IMR-90 (cell line): ENCODE measurements at regions of chr13 and their contacts with region 1.

Region 1: GRCh38 chr13:95834134-95834765 is 157.3 kb downstream of the DNAJC3 start:
- DNase-seq: peak; percentile 57
- ATAC-seq: peak; percentile 94
- H3K4me3 ChIP-seq: no peak overlapping the region
- H3K27ac ChIP-seq: no peak overlapping the region
- H3K4me1 ChIP-seq: no peaks in the 10 kb centered on the region
- H3K27me3 ChIP-seq: no peaks in the 10 kb centered on the region
- CTCF ChIP-seq: peak; percentile 96
- POLR2A ChIP-seq: no peak
- RAD21 ChIP-seq: peak; percentile 94

Region 2: GRCh38 chr13:95494082-95494681 is 340.1 kb before region 1 on chr13:
- CTCF ChIA-PET with region 1: interaction called, 4 read pairs
- POLR2A ChIA-PET with region 1: no interaction called
- dilution Hi-C with region 1: no loop called
- in situ Hi-C with region 1: no loop called
- intact Hi-C with region 1: loop called (anchors 1 kb)
- DNase-seq: peak; percentile 62
- ATAC-seq: peak; percentile 78; the same call in 1 of the 2 replicates
- H3K4me3 ChIP-seq: no peak overlapping the region
- H3K27ac ChIP-seq: no peak overlapping the region
- H3K4me1 ChIP-seq: no peaks in the 10 kb centered on the region
- H3K27me3 ChIP-seq: no peaks in the 10 kb centered on the region; the same call in 1 of the 2 replicates
- CTCF ChIP-seq: peak; percentile 58
- POLR2A ChIP-seq: no peak
- RAD21 ChIP-seq: peak; percentile 44

Region 3: GRCh38 chr13:95614641-95615245 is 219.5 kb before region 1 on chr13:
- CTCF ChIA-PET with region 1: no interaction called
- POLR2A ChIA-PET with region 1: no interaction called
- dilution Hi-C with region 1: no loop called
- in situ Hi-C with region 1: loop called (anchors 10 kb)
- intact Hi-C with region 1: no loop called
- DNase-seq: no peak
- ATAC-seq: no peak
- H3K4me3 ChIP-seq: no peak overlapping the region
- H3K27ac ChIP-seq: no peak overlapping the region
- H3K4me1 ChIP-seq: peaks cover under 1% of the 10 kb centered on the region; the same call in 1 of the 2 replicates
- H3K27me3 ChIP-seq: no peaks in the 10 kb centered on the region
- CTCF ChIP-seq: no peak
- POLR2A ChIP-seq: no peak
- RAD21 ChIP-seq: no peak

Region 4: DNA sequence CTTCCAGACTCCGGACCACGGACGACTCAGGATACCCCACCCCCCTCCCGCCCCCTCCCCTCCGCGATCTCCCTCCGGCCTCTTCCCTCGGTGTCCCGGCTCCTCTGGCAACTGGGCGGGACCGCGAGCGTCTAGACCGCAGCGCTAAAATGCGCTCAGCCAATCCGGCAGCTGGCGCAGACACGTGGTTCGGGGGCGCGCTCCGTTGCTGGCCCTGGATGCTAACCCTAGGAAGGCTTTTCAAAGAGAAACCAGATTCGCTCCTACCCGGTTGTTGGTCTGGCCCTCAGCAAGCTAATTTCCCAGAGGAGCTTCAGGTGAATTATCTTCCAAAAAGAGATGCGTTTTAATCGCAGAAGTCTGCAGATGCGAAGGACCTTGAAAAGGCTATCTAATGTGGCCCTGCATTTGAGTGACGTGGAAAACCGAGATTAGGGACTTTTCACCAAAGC is 189.6 kb before region 1 on chr13 and contains the start of gene DZIP1:
- CTCF ChIA-PET with region 1: interaction called, 3 read pairs
- POLR2A ChIA-PET with region 1: no interaction called
- dilution Hi-C with region 1: no loop called
- in situ Hi-C with region 1: no loop called
- intact Hi-C with region 1: loop called (anchors 1 kb)
- DNase-seq: peak; percentile 83
- ATAC-seq: peak; percentile 88
- H3K4me3 ChIP-seq: peak within 1 kb of the TSS; percentile 50
- H3K27ac ChIP-seq: peak within 1 kb of the TSS; percentile 80
- H3K4me1 ChIP-seq: peaks cover 10% of the 10 kb centered on the region
- H3K27me3 ChIP-seq: no peaks in the 10 kb centered on the region
- CTCF ChIP-seq: no peak
- POLR2A ChIP-seq: peak; percentile 81
- RAD21 ChIP-seq: no peak
- total RNA-seq, gene DZIP1: 12.2 and 16.9 TPM in 2 replicates

Region 5: DNA sequence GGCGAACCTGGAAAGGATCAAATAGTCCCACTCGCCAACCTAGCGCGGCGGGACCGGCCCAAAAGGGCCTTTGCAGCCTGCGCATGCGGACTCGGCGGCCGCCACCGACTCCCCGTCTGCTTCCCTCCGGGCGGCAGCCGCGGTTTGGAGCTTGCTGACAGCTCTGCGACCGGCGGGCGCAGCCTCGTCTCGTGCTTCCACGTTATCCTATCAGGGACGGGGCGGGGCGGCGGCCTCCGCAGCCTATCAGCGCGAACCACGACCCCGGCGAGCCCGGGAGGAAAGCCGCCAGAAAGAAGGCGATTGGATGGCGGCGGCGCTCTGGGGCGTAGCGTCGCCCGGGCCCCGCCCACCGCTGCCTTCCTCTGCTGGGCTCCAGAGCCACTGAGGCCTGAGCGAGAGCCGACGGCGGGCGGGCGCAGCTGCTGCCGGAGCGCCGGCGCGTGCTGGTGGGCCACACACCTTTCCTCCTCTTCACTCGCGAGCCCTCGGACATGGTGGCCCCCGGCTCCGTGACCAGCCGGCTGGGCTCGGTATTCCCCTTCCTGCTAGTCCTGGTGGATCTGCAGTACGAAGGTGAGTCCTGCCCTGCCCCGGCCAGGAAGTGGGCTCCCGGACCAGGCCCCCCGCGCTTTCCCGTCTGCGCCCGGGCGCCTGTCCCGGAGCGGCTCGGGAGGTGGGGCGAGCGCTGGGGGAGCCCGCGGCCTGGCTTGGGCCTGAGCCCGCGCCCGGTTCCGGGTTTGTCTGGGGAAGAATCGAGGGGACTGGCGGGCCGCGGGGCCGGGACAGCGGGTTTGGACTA is 157.3 kb before region 1 on chr13 and contains the start of gene DNAJC3:
- CTCF ChIA-PET with region 1: interaction called, 5 read pairs
- POLR2A ChIA-PET with region 1: no interaction called
- dilution Hi-C with region 1: no loop called
- in situ Hi-C with region 1: no loop called
- intact Hi-C with region 1: loop called (anchors 1 kb)
- DNase-seq: peak; percentile 96
- ATAC-seq: peak; percentile 97
- H3K4me3 ChIP-seq: peak within 1 kb of the TSS; percentile 85
- H3K27ac ChIP-seq: peak within 1 kb of the TSS; percentile 86
- H3K4me1 ChIP-seq: peaks cover 2% of the 10 kb centered on the region; the same call in 1 of the 2 replicates
- H3K27me3 ChIP-seq: no peaks in the 10 kb centered on the region
- CTCF ChIP-seq: no peak
- POLR2A ChIP-seq: peak; percentile 95
- RAD21 ChIP-seq: no peak
- total RNA-seq, gene DNAJC3: 28.5 and 51.4 TPM in 2 replicates

Region 6: GRCh38 chr13:95745752-95746151 is 88.5 kb before region 1 on chr13:
- CTCF ChIA-PET with region 1: no interaction called
- POLR2A ChIA-PET with region 1: no interaction called
- dilution Hi-C with region 1: no loop called
- in situ Hi-C with region 1: no loop called
- intact Hi-C with region 1: no loop called
- DNase-seq: no peak
- ATAC-seq: peak; percentile 44; the same call in 1 of the 2 replicates
- H3K4me3 ChIP-seq: no peak overlapping the region
- H3K27ac ChIP-seq: no peak overlapping the region
- H3K4me1 ChIP-seq: no peaks in the 10 kb centered on the region
- H3K27me3 ChIP-seq: no peaks in the 10 kb centered on the region
- CTCF ChIP-seq: no peak
- POLR2A ChIP-seq: no peak
- RAD21 ChIP-seq: no peak